ENCODE measurements at regions of chr13 and their contacts with region 1.

Region 1: GRCh38 chr13:95834134-95834765 is 157.3 kb downstream of the DNAJC3 start:
- DNase-seq: peak; percentile 15
- H3K4me3 ChIP-seq: no peak overlapping the region
- H3K27ac ChIP-seq: no peak overlapping the region
- H3K27me3 ChIP-seq: no peaks in the 10 kb centered on the region
- CTCF ChIP-seq: peak; percentile 95

Region 2: DNA sequence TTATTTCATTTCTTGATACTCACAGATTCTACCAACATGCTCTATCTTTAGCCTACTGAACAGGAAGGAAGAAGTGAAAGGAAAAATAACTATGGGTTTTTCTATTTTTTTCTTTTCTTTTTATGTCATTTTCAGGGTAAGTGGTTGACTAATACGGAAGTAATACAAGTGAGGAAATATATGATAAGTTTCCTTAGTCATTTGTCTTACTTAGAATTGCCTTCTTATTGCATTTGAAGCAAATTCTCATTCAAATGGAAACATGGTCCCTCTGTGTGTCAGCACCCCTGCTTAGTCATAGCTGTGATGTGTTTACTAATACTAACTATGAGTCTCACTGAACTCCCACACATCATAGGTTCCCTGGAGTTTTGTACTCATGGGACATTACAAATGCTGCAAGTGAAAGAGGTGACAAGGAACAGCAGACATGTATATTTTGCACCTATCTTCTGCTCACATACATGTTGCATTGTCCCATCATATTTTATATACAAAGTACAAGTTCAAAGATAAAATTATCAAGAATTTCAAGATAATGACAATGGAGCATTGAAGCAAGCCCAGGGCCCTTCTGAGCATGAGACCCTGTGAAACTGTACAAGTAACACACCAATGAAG is 1414.8 kb before region 1 on chr13:
- CTCF ChIA-PET with region 1: no interaction called
- POLR2A ChIA-PET with region 1: no interaction called
- DNase-seq: peak; percentile 15
- H3K4me3 ChIP-seq: no peak overlapping the region
- H3K27ac ChIP-seq: no peak overlapping the region
- H3K27me3 ChIP-seq: no peaks in the 10 kb centered on the region
- CTCF ChIP-seq: no peak

Region 3: DNA sequence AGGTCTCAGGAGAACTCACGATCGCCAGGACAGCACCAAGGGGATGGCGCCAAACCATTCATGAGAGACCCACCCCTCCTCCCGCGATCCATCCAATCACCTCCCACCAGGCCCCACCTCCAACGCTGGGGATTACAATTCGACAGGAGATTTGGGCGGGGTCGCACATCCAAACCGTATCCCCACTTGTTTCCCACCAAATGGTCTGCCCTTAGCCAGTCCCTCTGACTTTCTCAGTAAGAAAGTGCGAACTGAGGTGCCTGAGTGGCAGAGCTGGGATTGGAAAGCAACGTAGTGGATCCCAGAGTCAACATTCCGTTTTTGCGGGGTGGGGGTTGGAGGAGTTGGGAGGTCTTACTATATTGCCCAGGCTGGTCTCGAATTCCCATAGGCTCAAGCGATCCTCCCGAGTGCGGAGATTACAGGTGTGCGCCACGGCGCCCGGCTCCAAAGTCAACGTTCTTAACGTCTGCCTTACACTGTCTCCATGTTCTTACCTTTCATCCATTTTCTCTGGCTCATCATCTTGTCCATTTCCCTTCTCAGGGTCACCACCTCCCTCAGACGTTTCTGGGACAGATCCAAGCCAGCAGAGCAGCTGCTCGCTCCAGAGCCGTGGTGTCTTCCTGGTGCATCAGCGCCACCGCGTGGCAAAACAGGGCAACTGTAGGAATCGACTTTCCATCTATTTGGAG is 430.3 kb before region 1 on chr13:
- CTCF ChIA-PET with region 1: interaction called, 15 read pairs
- POLR2A ChIA-PET with region 1: no interaction called
- DNase-seq: peak; percentile 55
- H3K4me3 ChIP-seq: peak overlapping the region; percentile 57
- H3K27ac ChIP-seq: no peak overlapping the region
- H3K27me3 ChIP-seq: no peaks in the 10 kb centered on the region
- CTCF ChIP-seq: peak; percentile 93

Region 4: DNA sequence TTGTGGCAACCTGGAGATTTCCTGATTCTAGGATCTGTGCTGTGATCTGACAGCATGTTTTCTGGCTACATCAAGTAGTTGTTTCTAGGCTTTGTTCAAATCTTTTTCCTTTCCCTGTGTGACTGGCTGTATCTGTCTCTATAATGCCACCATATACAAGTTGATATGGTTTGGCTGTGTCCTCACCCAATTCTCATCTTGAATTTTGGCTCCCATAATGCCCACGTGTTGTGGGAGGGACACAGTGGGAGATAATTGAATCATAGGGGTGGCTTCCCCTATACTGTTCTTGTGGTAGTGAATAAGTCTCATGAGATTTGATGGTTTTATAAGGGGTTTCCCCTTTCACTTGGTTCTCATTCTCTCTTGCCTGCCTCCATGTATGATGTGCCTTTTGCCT is 306.3 kb before region 1 on chr13:
- CTCF ChIA-PET with region 1: interaction called, 14 read pairs
- POLR2A ChIA-PET with region 1: no interaction called
- DNase-seq: no peak
- H3K4me3 ChIP-seq: no peak overlapping the region
- H3K27ac ChIP-seq: no peak overlapping the region
- H3K27me3 ChIP-seq: no peaks in the 10 kb centered on the region
- CTCF ChIP-seq: no peak

Region 5: DNA sequence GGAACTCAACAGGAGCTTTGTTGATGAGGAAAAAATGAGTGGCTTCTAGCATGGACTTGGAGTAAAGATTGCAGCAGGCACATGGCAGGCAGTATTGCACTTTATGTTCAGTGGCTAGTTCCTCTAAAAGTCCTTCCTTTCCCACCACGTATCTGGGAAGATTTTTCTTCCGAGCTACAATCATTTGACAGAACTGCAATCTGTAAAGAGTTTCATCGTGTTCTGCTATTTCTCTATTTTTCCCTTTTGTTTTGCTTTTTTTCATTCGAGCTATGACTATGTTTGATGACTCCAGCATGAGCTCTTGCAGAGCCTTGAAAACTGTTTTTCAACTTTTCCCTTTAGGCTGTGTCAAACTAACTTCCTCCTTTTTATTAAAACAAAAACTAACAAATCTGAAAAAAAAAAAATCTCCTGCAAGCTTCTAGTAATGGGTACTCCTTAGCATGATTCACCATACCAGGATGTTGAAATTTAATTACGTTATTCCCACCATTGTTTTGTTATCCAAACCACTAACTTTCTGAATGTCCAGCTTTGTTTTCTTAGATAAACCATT is 269.4 kb before region 1 on chr13:
- CTCF ChIA-PET with region 1: interaction called, 14 read pairs
- POLR2A ChIA-PET with region 1: no interaction called
- DNase-seq: no peak
- H3K4me3 ChIP-seq: no peak overlapping the region
- H3K27ac ChIP-seq: no peak overlapping the region
- H3K27me3 ChIP-seq: peaks cover 3% of the 10 kb centered on the region
- CTCF ChIP-seq: no peak

Region 6: DNA sequence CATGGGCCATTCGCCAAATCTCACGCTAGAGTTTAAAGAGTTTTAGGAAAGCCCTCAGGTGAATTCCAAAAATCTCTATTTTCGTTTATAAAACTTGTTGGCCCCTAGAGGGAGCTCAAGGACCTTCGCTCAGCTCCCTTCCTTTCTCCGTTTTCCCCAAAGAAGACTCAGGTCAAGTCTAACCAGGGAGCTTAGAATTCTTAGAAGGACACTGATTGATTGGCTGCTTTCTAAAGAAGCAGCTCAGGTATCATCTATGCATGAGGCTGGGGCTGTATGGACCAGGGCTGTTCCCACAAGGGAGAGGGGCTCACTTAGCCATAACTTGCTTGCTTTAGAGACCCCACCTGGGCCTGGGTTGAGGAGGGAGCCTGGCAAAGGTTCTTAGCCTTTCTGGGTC is 210.2 kb before region 1 on chr13:
- CTCF ChIA-PET with region 1: interaction called, 266 read pairs
- POLR2A ChIA-PET with region 1: interaction called, 4 read pairs
- DNase-seq: no peak
- H3K4me3 ChIP-seq: no peak overlapping the region
- H3K27ac ChIP-seq: no peak overlapping the region
- H3K27me3 ChIP-seq: no peaks in the 10 kb centered on the region
- CTCF ChIP-seq: peak; percentile 79

Region 7: GRCh38 chr13:95660981-95661581 is 173.2 kb before region 1 on chr13:
- CTCF ChIA-PET with region 1: interaction called, 34 read pairs
- POLR2A ChIA-PET with region 1: no interaction called
- DNase-seq: no peak
- H3K4me3 ChIP-seq: no peak overlapping the region
- H3K27ac ChIP-seq: no peak overlapping the region
- H3K27me3 ChIP-seq: peaks cover 6% of the 10 kb centered on the region
- CTCF ChIP-seq: peak; percentile 67

Region 8: DNA sequence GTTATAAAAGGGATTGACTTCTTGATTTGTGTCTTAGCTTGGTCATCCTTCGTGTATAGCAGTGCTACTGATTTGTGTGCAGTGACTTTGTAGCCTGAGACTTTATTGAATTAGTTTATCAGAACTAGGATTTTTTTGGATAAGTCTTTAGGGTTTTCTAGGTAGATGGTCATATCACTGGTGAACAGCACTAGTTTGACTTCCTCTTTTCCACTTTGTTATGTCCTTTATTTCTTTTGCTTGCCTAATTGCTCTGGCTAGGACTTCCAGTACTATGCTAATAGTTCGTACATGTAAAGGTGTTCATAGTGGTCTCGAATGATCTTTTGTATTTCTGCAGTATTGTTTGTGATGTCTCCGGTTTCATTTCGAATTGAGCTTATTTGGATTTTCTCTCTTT is 11.9 kb before region 1 on chr13:
- CTCF ChIA-PET with region 1: interaction called, 99 read pairs
- POLR2A ChIA-PET with region 1: no interaction called
- DNase-seq: no peak
- H3K4me3 ChIP-seq: no peak overlapping the region
- H3K27ac ChIP-seq: no peak overlapping the region
- H3K27me3 ChIP-seq: no peaks in the 10 kb centered on the region
- CTCF ChIP-seq: no peak